CD8-positive, alpha-beta memory T cell (primary cell): ENCODE measurements at regions of chr2 and their contacts with region 1.

Region 1: GRCh38 chr2:177263451-177264208 is 897 bp downstream of the NFE2L2 start:
- DNase-seq: peak; percentile 93 to 96 (median 94)
- H3K4me3 ChIP-seq: peak overlapping the region; percentile 85
- H3K4me3 Mint-ChIP-seq: peak overlapping the region; percentile 89 to 99 (median 95)
- H3K27ac ChIP-seq: peak overlapping the region; percentile 99
- H3K27ac Mint-ChIP-seq: peak overlapping the region; percentile 95 to 100 (median 99)
- H3K4me1 ChIP-seq: peaks cover 47% of the 10 kb centered on the region
- H3K4me1 Mint-ChIP-seq: peaks cover 49 to 64% (median 57%) of the 10 kb centered on the region in 3 donors
- H3K27me3 ChIP-seq: no peaks in the 10 kb centered on the region
- H3K27me3 Mint-ChIP-seq: peaks cover 0 to 1% of the 10 kb centered on the region in 2 donors

Region 2: GRCh38 chr2:177148477-177149154 is 115.0 kb before region 1 on chr2:
- CTCF ChIA-PET with region 1: interaction called, 19 read pairs
- POLR2A ChIA-PET with region 1: interaction called, 3 read pairs
- DNase-seq: peak; percentile 60 to 78 (median 63)
- H3K4me3 ChIP-seq: peak overlapping the region; percentile 71
- H3K4me3 Mint-ChIP-seq: peak overlapping the region; percentile 70 to 92 (median 89)
- H3K27ac ChIP-seq: no peak overlapping the region
- H3K27ac Mint-ChIP-seq: peak overlapping the region in 7 of 8 donors; percentile 14 to 82 (median 67)
- H3K4me1 ChIP-seq: peaks cover 9% of the 10 kb centered on the region
- H3K4me1 Mint-ChIP-seq: peaks cover 9 to 19% (median 18%) of the 10 kb centered on the region in 3 donors
- H3K27me3 ChIP-seq: peaks cover 29% of the 10 kb centered on the region
- H3K27me3 Mint-ChIP-seq: peaks cover 13 to 29% of the 10 kb centered on the region in 2 donors

Region 3: GRCh38 chr2:177221534-177221933 is 42.1 kb before region 1 on chr2:
- CTCF ChIA-PET with region 1: interaction called, 38 read pairs
- POLR2A ChIA-PET with region 1: interaction called, 16 read pairs
- DNase-seq: no peak
- H3K4me3 ChIP-seq: no peak overlapping the region
- H3K4me3 Mint-ChIP-seq: no peak overlapping the region
- H3K27ac ChIP-seq: no peak overlapping the region
- H3K27ac Mint-ChIP-seq: peak overlapping the region in 6 of 8 donors; percentile 24 to 67 (median 44)
- H3K4me1 ChIP-seq: peaks cover 28% of the 10 kb centered on the region
- H3K4me1 Mint-ChIP-seq: peaks cover 45 to 66% (median 65%) of the 10 kb centered on the region in 3 donors
- H3K27me3 ChIP-seq: no peaks in the 10 kb centered on the region
- H3K27me3 Mint-ChIP-seq: peaks cover 0 to 2% of the 10 kb centered on the region in 2 donors

Region 4: GRCh38 chr2:177281400-177282180 is 18.0 kb after region 1 on chr2:
- CTCF ChIA-PET with region 1: interaction called, 51 read pairs
- POLR2A ChIA-PET with region 1: interaction called, 5 read pairs
- DNase-seq: no peak
- H3K4me3 ChIP-seq: no peak overlapping the region
- H3K4me3 Mint-ChIP-seq: no peak overlapping the region
- H3K27ac ChIP-seq: no peak overlapping the region
- H3K27ac Mint-ChIP-seq: peak overlapping the region in 1 of 8 donors; percentile 69
- H3K4me1 ChIP-seq: no peaks in the 10 kb centered on the region
- H3K4me1 Mint-ChIP-seq: peaks cover 0 to 4% (median 0%) of the 10 kb centered on the region in 3 donors
- H3K27me3 ChIP-seq: no peaks in the 10 kb centered on the region
- H3K27me3 Mint-ChIP-seq: no peaks in the 10 kb centered on the region

Region 5: DNA sequence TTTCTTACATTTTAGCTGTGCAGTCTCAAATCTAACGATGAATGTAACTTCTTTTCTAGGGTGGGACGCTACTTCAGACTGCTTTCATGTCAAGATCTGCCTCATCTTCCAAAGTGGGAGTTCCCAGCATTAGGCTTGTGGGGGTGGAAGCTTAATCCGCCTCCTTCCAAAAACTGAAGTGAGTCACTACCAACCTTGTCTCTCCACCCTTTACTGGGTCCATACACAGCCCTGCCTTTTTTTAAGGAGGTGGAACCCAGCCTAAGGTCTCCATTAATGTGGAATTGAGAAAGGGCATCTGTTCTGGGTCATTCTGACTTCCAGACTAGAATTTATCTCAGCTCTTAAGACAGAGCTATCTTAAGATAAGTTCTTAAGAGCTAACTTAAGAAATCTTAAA is 42.9 kb after region 1 on chr2:
- CTCF ChIA-PET with region 1: interaction called, 24 read pairs
- POLR2A ChIA-PET with region 1: interaction called, 18 read pairs
- DNase-seq: no peak
- H3K4me3 ChIP-seq: no peak overlapping the region
- H3K4me3 Mint-ChIP-seq: no peak overlapping the region
- H3K27ac ChIP-seq: no peak overlapping the region
- H3K27ac Mint-ChIP-seq: no peak overlapping the region
- H3K4me1 ChIP-seq: peaks cover 35% of the 10 kb centered on the region
- H3K4me1 Mint-ChIP-seq: peaks cover 16 to 23% (median 23%) of the 10 kb centered on the region in 3 donors
- H3K27me3 ChIP-seq: no peaks in the 10 kb centered on the region
- H3K27me3 Mint-ChIP-seq: peaks cover 0 to 2% of the 10 kb centered on the region in 2 donors

Region 6: DNA sequence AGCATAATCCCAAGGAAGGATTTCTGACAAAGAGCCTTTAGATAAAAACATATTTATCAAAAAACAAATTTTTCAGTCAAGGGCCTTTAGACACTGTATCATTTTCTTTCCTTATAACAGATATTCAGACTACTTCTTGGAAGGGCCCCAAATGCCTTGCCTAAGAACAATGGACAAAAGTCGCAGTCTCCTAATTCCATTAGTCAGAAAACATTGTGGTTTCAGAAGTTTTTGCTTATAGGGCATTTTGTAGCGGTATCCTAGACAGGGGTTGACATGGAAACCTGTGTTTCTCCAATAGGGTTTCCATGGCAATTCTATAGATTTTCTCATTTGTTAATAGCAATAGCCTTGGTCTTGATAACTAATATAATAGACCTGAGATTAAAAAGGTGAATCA is 92.2 kb after region 1 on chr2:
- CTCF ChIA-PET with region 1: no interaction called
- POLR2A ChIA-PET with region 1: no interaction called
- DNase-seq: no peak
- H3K4me3 ChIP-seq: no peak overlapping the region
- H3K4me3 Mint-ChIP-seq: no peak overlapping the region
- H3K27ac ChIP-seq: no peak overlapping the region
- H3K27ac Mint-ChIP-seq: no peak overlapping the region
- H3K4me1 ChIP-seq: no peaks in the 10 kb centered on the region
- H3K4me1 Mint-ChIP-seq: peaks cover 6 to 8% (median 7%) of the 10 kb centered on the region in 3 donors
- H3K27me3 ChIP-seq: no peaks in the 10 kb centered on the region
- H3K27me3 Mint-ChIP-seq: no peaks in the 10 kb centered on the region

Region 7: DNA sequence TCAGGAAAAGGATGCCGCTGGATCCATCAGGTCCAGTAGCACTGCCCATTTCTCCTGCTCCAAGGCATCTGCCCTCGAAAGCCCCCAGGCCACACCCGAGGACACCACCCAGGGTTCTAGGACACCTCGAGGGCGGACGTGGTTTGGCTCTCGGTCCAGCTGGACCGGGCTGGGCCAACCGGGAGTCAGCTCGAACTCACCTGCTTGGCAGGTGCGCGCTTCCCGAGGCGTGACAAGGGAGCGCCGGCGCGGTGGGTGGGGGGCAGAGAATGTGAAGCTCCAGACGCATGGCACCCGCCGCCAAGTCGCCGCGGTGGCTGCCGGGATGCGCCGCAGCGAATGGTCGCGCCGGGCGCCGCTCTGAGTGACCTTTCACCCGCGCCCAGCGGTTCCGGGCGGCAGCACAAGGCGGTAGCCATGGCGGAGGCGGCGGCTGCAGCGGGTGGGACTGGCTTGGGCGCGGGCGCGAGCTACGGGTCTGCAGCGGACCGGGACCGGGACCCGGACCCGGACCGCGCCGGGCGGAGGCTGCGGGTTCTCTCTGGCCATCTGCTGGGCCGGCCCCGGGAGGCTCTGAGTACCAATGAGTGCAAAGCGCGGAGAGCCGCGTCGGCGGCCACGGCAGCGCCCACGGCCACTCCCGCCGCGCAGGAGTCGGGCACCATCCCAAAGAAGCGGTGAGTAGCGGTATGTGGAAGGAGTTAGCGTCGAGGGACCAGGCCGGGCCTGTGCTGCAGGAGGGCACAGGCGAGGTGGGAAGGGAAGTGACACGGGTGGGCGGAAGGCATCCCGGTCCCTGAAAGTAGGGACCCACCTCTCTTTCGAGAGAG is 129.0 kb after region 1 on chr2 and contains the start of gene AGPS:
- CTCF ChIA-PET with region 1: interaction called, 11 read pairs
- POLR2A ChIA-PET with region 1: interaction called, 29 read pairs
- DNase-seq: peak; percentile 64 to 84 (median 73)
- H3K4me3 ChIP-seq: peak within 1 kb of the TSS; percentile 86
- H3K4me3 Mint-ChIP-seq: peak within 1 kb of the TSS; percentile 83 to 95 (median 92)
- H3K27ac ChIP-seq: peak within 1 kb of the TSS; percentile 68
- H3K27ac Mint-ChIP-seq: peak within 1 kb of the TSS; percentile 59 to 97 (median 90)
- H3K4me1 ChIP-seq: peaks cover 31% of the 10 kb centered on the region
- H3K4me1 Mint-ChIP-seq: peaks cover 55 to 66% (median 64%) of the 10 kb centered on the region in 3 donors
- H3K27me3 ChIP-seq: no peaks in the 10 kb centered on the region
- H3K27me3 Mint-ChIP-seq: no peaks in the 10 kb centered on the region
- total RNA-seq, gene AGPS: 64.3 to 65.1 TPM